ENCODE measurements at regions of chr6 and their contacts with region 1.

Region 1: DNA sequence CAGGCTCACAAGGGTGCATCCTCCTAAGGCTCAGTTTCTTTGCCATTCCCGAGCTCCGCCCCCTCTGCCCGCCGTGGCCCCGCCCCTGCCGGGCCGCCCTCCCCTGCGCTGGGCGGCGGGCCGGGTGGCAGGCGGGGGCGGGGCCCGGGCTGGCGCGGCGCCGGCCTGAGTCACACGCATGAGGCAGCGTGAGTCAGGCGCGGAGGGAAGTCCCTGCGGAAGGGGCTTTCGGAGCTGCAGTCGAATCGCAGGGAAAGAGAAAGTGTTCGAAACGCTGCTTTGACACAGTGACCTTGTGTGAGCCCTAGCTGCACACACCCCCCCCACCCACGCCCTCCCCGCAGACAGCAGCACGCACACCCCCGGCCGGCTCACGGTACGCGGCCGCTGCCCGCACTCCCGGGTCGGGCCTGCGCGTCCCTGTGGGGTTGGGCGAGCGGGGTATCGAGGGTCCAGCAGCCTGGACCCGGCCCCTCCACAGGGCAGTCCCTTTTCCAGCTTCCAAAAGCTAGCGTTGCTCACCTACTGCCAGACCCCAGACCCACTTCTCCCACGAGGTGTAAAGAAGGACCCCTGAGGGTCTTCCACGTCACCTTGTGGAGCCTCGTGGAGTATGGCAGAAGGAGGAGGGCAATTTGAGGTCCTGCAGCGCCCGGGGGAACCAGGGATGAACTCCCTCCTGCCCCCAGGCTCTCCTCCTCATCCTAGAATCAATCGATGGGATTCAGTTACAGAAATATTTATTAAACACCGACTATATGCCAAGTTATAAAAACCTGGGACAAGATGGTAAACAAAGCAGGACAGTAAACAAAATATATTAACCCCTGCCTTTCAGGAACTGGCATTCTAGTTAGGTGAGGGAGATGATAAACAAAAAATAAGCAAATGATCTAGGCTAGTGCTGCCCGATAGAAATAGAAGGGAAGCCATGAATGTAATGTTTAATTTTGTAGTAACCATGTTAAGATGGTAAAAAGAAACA is 12.4 kb upstream of the HMGA1 start:
- DNase-seq: peak; percentile 81
- ATAC-seq: peak; percentile 91
- H3K4me3 ChIP-seq: peak overlapping the region; percentile 60 to 76 (median 72)
- H3K27ac ChIP-seq: peak overlapping the region; percentile 38
- H3K4me1 ChIP-seq: peaks cover 38% of the 10 kb centered on the region
- H3K27me3 ChIP-seq: peaks cover 3 to 25% of the 10 kb centered on the region in 2 experiments; a peak in 2 of 5 replicates
- CTCF ChIP-seq: no peak
- EP300 ChIP-seq: peak in 1 of 2 experiments; percentile 24; a peak in 1 of 4 replicates
- POLR2A ChIP-seq: peak; percentile 88 to 93
- RAD21 ChIP-seq: peak; percentile 9; the same call in 1 of the 2 replicates

Region 2: GRCh38 chr6:34027445-34027936 is 196.8 kb before region 1 on chr6:
- CTCF ChIA-PET with region 1: no interaction called
- POLR2A ChIA-PET with region 1: no interaction called
- in situ Hi-C with region 1: no loop called
- intact Hi-C with region 1: no loop called
- DNase-seq: peak; percentile 30
- ATAC-seq: peak; percentile 83
- H3K4me3 ChIP-seq: no peak overlapping the region
- H3K27ac ChIP-seq: no peak overlapping the region
- H3K4me1 ChIP-seq: no peaks in the 10 kb centered on the region
- H3K27me3 ChIP-seq: peaks cover 18 to 72% of the 10 kb centered on the region in 2 experiments; a peak in 4 of 5 replicates
- CTCF ChIP-seq: peak; percentile 96
- EP300 ChIP-seq: no peak
- POLR2A ChIP-seq: no peak
- RAD21 ChIP-seq: peak; percentile 97

Region 3: DNA sequence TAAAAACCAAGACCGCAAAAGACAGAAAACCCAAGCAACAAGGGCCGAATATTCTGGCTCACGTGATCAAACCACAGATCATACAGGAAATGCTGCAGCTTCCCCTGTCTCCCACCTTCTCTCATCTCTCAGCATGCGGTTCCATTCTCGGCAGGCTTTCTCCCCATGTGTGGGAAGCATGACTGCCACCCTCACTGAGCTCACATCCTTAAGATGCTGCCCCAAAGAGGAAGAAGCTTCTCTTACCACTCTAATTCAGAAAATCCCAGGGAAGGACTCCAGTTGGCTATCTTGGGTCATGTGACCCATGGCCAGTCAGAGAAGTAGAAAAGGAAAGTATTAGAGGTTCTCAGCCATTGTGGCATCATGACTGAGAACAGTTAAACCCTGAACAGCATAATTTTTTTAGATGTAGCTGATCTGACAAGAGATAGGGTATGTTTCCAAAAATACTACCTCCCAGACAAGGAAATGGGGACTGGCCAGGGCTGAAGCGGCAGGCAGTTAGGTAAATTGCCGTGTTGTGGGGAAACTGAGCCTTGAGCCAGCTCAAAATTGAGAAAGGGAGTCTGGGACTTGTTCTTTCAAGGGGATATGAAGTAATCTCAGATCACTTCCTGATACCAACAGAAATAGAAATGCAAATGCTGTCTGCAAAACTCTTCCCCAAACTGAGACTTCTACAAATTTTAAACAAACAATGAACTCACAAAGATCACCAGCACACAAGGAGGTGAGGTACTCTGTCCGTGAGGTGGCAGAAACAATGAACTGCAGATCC is 41.3 kb before region 1 on chr6:
- CTCF ChIA-PET with region 1: no interaction called
- POLR2A ChIA-PET with region 1: no interaction called
- in situ Hi-C with region 1: no loop called
- intact Hi-C with region 1: no loop called
- DNase-seq: no peak
- ATAC-seq: no peak
- H3K4me3 ChIP-seq: no peak overlapping the region
- H3K27ac ChIP-seq: no peak overlapping the region
- H3K4me1 ChIP-seq: no peaks in the 10 kb centered on the region
- H3K27me3 ChIP-seq: peaks cover 5 to 7% of the 10 kb centered on the region in 2 experiments; a peak in 2 of 5 replicates
- CTCF ChIP-seq: no peak
- EP300 ChIP-seq: no peak
- POLR2A ChIP-seq: no peak
- RAD21 ChIP-seq: no peak

Region 4: DNA sequence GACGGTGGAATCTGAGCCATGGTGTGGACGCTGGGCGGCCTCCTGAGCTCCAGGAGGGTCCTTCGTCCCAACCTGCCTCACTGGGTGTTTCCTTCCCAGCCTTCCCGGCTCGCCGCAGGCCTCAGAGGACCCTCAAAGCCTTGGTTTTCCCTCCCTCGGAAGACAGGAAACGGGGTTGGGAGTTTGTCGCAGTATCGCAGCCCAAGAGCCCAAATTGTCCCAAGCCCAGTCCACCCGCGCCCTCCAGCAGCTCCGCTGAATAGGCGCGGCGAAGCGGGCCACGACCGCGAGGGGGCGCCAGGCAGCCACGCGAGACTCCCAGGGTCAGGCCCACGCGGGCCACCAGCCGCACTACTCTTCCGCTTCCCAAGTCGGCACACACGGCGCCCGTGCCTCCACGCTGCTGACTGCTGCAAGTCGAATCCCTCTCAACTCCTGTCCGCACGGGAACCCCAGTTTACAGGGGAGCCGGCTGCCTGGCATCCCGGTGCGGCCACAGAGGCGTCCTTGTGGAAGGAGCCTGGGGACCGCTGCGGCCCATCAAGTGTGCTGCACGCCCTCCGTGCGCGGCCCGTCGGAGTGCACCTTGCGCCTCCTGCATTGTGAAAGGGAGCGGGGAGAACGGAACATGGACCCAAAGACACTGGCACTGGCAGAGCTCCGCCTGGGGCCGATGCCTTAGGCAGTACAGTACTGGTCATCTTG is 28.0 kb before region 1 on chr6:
- CTCF ChIA-PET with region 1: no interaction called
- POLR2A ChIA-PET with region 1: interaction called, 13 read pairs
- in situ Hi-C with region 1: no loop called
- intact Hi-C with region 1: no loop called
- DNase-seq: no peak
- ATAC-seq: peak; percentile 90
- H3K4me3 ChIP-seq: peak overlapping the region; percentile 55 to 74 (median 59)
- H3K27ac ChIP-seq: no peak overlapping the region
- H3K4me1 ChIP-seq: peaks cover 13% of the 10 kb centered on the region; the same call in 1 of the 2 replicates
- H3K27me3 ChIP-seq: peaks cover 8 to 26% of the 10 kb centered on the region in 2 experiments; a peak in 4 of 5 replicates
- CTCF ChIP-seq: peak; percentile 100
- EP300 ChIP-seq: no peak
- POLR2A ChIP-seq: no peak
- RAD21 ChIP-seq: peak; percentile 93

Measured in HepG2 (cell line).